SK-N-SH (cell line): ENCODE measurements at regions of chr17 and their contacts with region 1.

Region 1: GRCh38 chr17:32896647-32897258 is 19.8 kb upstream of the MYO1D start:
- DNase-seq: no peak
- H3K4me3 ChIP-seq: no peak overlapping the region
- H3K27ac ChIP-seq: no peak overlapping the region
- H3K4me1 ChIP-seq: no peaks in the 10 kb centered on the region; a peak in 1 of 4 replicates
- H3K27me3 ChIP-seq: no peaks in the 10 kb centered on the region; the same call in 1 of the 2 replicates
- CTCF ChIP-seq: no peak
- EP300 ChIP-seq: no peak
- RAD21 ChIP-seq: no peak

Region 2: DNA sequence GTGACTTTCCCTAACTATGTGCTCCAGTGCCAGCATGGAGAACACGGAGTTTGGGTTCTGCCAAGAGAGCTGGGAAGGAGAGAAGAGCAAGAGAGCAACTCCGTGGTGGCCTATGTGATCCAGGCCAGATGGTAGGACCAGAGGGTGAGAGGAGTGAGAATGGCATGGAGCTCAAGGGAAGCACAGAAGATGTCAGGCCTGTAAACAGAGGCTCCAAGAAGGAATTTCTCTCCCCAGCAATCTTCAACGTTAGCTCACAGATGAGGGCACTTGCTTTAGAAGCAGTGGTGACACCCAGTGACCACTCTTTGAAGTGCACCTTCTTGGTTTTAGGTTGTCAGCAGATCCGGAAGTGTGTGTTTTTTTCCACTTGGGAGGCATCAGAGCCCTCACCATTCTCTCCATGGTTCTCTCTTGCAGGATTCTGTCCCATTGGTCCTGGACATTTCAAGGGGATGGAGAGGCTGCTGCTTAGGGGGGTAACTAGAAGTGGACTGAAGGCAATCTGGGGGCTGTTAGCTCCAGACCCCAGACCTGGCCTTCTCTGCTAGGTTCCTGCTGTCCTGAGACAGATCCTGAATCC is 13.1 kb after region 1 on chr17:
- CTCF ChIA-PET with region 1: interaction called, 15 read pairs
- POLR2A ChIA-PET with region 1: no interaction called
- DNase-seq: peak; percentile 71
- H3K4me3 ChIP-seq: no peak overlapping the region; a peak in 1 of 4 replicates
- H3K27ac ChIP-seq: no peak overlapping the region
- H3K4me1 ChIP-seq: no peaks in the 10 kb centered on the region; a peak in 1 of 4 replicates
- H3K27me3 ChIP-seq: no peaks in the 10 kb centered on the region
- CTCF ChIP-seq: peak; percentile 78
- EP300 ChIP-seq: no peak
- RAD21 ChIP-seq: peak; percentile 73

Region 3: GRCh38 chr17:32926183-32926582 is 29.4 kb after region 1 on chr17:
- CTCF ChIA-PET with region 1: no interaction called
- POLR2A ChIA-PET with region 1: no interaction called
- DNase-seq: no peak
- H3K4me3 ChIP-seq: no peak overlapping the region
- H3K27ac ChIP-seq: no peak overlapping the region
- H3K4me1 ChIP-seq: peaks cover 7 to 12% of the 10 kb centered on the region in 2 experiments; a peak in 2 of 4 replicates
- H3K27me3 ChIP-seq: no peaks in the 10 kb centered on the region
- CTCF ChIP-seq: no peak
- EP300 ChIP-seq: no peak
- RAD21 ChIP-seq: no peak

Region 4: DNA sequence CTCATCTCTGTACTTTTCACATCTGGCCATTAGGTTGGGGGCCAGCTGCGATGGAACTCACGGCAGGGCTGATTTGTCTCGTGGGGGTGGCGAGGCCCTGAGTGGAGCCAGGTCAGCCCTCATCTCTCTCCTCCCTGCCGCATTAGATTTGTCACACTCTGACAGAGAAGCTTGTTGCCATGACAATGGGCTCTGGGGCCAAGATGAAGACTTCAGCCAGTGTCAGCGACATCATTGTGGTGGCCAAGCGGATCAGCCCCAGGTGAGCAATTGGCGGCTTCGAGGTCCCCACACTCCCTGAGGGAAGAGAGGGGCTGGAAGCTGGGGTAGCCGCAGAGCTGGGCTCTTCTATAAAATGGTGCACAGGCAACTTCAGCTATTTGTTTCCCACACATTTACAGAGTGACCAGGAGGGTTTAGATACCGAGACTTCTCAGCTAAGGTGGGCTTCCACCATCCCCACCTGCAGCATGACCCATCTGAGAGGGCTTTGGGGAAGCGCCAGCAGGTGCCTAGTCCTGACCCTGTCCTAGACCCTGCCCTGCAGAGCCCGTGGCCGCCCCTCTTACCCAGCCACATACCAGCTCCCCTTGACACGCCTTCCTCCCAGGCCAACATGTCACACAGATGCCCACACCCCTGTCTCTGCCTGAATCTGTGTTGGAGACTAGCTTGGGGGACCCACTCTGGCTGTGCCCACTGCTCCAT is 39.6 kb after region 1 on chr17:
- CTCF ChIA-PET with region 1: no interaction called
- POLR2A ChIA-PET with region 1: no interaction called
- DNase-seq: no peak
- H3K4me3 ChIP-seq: no peak overlapping the region
- H3K27ac ChIP-seq: no peak overlapping the region
- H3K4me1 ChIP-seq: no peaks in the 10 kb centered on the region; a peak in 1 of 4 replicates
- H3K27me3 ChIP-seq: no peaks in the 10 kb centered on the region
- CTCF ChIP-seq: no peak
- EP300 ChIP-seq: no peak
- RAD21 ChIP-seq: no peak

Region 5: DNA sequence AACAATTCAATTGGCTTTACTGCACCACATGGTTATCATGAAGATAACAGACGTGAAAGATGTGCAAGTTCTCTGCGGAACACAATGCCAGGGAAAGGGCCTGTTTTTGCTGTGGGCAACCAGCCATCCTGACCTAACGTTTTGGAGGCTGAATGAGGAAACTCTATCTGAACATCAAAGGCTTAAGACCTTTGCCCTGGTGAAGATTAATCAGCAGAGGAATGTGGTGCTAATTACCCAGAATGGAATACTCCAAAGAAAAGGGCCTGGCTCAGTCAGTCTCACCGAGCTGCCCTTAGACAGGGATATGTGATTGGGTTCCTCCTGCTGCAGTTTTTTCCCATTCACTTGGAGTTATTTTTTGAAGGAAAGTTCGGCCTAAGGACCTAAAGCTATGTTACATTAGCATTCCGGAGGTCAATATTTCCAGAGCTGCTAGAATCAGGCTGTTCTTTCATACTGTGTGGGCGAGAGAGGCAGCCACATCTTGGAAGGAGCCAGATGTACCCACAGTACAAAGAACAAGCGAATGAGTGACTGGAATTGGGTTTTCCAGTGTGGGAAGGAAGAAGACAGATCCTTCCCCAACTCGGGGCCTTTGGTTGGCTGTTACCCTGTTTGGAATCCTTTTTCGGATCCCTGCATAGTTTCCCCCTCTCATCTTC is 380.8 kb after region 1 on chr17:
- CTCF ChIA-PET with region 1: no interaction called
- POLR2A ChIA-PET with region 1: no interaction called
- DNase-seq: no peak
- H3K4me3 ChIP-seq: no peak overlapping the region
- H3K27ac ChIP-seq: no peak overlapping the region
- H3K4me1 ChIP-seq: no peaks in the 10 kb centered on the region; a peak in 1 of 4 replicates
- H3K27me3 ChIP-seq: no peaks in the 10 kb centered on the region
- CTCF ChIP-seq: no peak
- EP300 ChIP-seq: no peak
- RAD21 ChIP-seq: no peak